ENCODE measurements at regions of chr9 and their contacts with region 1.

Region 1: GRCh38 chr9:100714372-100715099 is 136.7 kb downstream of the CAVIN4 start:
- DNase-seq: peak; percentile 25 to 69
- ATAC-seq: peak in 5 of 8 donors; percentile 46 to 62 (median 58)
- H3K4me3 ChIP-seq: peak overlapping the region in 3 of 10 donors; percentile 9 to 15 (median 11)
- H3K27ac ChIP-seq: no peak overlapping the region
- H3K4me1 ChIP-seq: no peaks in the 10 kb centered on the region
- H3K27me3 ChIP-seq: peaks cover 0 to 21% (median 7%) of the 10 kb centered on the region in 7 donors
- CTCF ChIP-seq: peak; percentile 46 to 92 (median 84)

Region 2: DNA sequence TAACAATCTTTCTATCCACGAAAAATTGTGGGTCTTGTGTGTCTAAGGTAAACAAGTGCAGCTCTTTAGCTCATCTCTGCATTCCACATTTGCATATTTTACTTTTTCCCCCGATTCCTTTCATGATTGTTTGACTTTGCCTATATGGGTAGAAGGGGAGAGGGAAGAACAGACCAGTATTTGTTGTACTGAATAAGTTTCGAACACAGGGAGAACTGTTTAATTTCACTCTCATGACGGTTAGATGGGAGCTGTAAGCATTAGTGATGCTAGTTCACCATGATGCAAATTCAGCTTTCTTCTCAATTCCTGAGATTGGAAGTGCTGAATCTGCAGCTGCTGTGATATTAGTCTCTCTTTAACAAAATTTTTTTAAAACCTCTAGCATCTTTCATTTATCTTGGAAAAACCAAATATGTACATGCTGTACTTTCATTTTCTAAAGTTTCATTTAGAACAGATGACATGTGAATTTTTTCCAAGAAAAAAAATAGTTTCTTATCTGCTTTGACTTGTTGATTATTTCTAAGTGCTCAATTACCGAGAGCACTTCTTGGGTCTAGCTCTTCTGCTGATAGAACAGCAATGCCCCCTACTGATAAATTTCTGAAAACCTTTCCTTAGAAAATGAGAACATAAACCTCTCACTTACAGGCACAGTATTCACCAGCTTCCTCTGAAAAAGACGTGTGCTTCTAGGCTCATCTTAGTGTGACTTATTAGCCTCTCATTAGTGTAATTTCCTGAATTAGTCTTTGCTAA is 520.8 kb after region 1 on chr9:
- intact Hi-C with region 1: loop called in 7 of 10 experiments (anchors 5 to 10 kb)
- DNase-seq: no peak
- ATAC-seq: no peak
- H3K4me3 ChIP-seq: no peak overlapping the region
- H3K27ac ChIP-seq: no peak overlapping the region
- H3K4me1 ChIP-seq: no peaks in the 10 kb centered on the region
- H3K27me3 ChIP-seq: peaks cover 0 to 6% (median 0%) of the 10 kb centered on the region in 7 donors
- CTCF ChIP-seq: peak; percentile 29 to 75 (median 54)

Measured in heart right ventricle (tissue), 16 donors.